ENCODE measurements at regions of chr19 and their contacts with region 1.

Region 1: DNA sequence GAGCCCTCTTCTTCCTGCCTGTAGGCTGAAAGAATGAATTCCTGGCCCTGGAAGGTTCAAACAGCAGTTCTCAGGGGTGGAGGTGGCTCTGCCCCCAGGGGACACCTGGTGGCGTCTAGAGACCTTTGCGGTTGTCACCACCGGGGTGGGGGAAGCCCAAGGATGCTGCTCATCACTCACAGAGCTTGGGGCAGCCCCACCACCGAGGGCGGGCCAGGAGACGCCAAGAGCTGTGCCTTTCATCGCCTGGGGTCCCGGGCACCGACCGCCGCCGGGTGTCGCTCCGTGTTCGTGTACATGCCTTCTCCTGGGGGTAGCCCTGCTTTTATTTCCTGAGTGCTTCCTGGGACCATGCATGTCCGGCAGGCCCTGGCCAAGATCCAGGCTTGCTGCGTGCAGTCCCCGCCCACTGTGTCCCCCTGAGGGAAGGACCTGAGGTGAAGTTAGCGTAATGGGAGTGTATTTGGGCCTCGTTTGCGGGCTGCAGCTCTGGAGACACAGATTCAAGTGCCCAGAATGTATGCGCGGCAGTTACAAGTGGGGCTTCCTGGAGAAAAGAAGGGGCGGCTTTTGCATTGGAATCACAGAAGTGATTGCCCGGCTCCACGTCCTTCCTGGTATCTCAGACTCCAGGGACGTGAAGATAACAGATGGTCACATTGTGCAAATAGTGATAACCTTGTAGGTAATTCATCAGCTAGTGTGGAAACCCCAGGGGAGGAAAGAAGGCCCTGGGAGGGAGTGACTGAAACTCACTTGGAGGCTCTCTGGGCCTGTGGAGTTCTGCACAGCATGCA is 7.8 kb downstream of the DOT1L start:
- DNase-seq: no peak
- H3K4me3 ChIP-seq: no peak overlapping the region
- H3K27ac ChIP-seq: peak overlapping the region in 2 of 59 donors; percentile 15 to 21
- H3K27me3 ChIP-seq: no peaks in the 10 kb centered on the region
- CTCF ChIP-seq: no peak

Region 2: GRCh38 chr19:2315818-2316353 is 144.3 kb after region 1 on chr19:
- intact Hi-C with region 1: loop called in 1 of 2 experiments (anchors 5 kb)
- DNase-seq: peak in 8 of 10 donors; percentile 61 to 81 (median 74)
- H3K4me3 ChIP-seq: no peak overlapping the region
- H3K27ac ChIP-seq: peak overlapping the region in 18 of 59 donors; percentile 8 to 60 (median 30)
- H3K27me3 ChIP-seq: peaks cover 0 to 10% (median 0%) of the 10 kb centered on the region in 45 donors
- CTCF ChIP-seq: peak; percentile 29 to 88 (median 76)

Region 3: GRCh38 chr19:2385053-2385721 is 213.6 kb after region 1 on chr19:
- intact Hi-C with region 1: loop called in 1 of 2 experiments (anchors 10 kb)
- DNase-seq: peak in 3 of 10 donors; percentile 7 to 50 (median 20)
- H3K4me3 ChIP-seq: peak overlapping the region in 6 of 59 donors; percentile 7 to 30 (median 13)
- H3K27ac ChIP-seq: no peak overlapping the region
- H3K27me3 ChIP-seq: peaks cover 0 to 9% (median 0%) of the 10 kb centered on the region in 45 donors
- CTCF ChIP-seq: no peak

Measured in dorsolateral prefrontal cortex (tissue), 120 donors.